Ascending aorta (tissue), 2 donors: ENCODE measurements at regions of chr10 and their contacts with region 1.

Region 1: DNA sequence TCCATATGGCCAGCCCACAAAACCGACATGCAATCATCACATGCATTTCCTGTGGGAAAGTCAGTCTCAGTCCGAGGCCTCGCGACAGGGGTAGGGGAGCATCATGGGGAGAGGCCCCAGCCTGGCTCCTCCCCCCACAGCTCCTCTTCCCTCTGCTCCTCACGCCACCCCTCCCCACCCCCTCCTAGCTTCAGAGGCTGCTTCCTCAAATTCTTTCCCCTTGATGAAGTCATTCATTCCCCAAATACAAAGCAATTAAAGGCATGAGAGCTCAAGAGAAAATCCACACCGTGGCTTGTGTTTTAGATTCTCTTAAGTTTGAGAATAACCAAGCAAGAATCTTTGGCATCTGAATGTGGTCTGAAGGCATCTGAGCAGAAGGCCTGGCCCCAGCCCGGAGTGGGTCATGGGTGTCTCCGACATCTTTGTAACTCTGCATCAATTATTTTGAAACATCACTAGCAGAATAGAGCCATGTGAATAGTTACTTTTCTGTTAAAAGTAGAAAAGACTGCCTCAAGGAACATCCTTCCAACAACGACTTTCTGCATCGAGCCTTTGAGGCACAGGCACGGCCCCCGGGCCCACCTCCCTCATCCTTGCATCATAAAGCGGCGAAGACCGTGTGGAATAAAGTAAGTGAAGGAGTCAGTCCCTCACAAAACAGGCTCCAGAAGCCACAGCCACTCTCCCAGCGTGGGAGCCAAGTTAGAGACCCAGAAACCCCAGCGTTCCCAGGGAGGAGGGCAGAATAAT is 90.9 kb downstream of the DIP2C start:
- DNase-seq: peak in 1 of 2 donors; percentile 69
- H3K4me3 ChIP-seq: no peak overlapping the region
- H3K27ac ChIP-seq: peak overlapping the region; percentile 92 to 95
- H3K4me1 ChIP-seq: peaks cover 6 to 53% of the 10 kb centered on the region in 2 donors
- H3K27me3 ChIP-seq: no peaks in the 10 kb centered on the region
- CTCF ChIP-seq: no peak

Region 2: DNA sequence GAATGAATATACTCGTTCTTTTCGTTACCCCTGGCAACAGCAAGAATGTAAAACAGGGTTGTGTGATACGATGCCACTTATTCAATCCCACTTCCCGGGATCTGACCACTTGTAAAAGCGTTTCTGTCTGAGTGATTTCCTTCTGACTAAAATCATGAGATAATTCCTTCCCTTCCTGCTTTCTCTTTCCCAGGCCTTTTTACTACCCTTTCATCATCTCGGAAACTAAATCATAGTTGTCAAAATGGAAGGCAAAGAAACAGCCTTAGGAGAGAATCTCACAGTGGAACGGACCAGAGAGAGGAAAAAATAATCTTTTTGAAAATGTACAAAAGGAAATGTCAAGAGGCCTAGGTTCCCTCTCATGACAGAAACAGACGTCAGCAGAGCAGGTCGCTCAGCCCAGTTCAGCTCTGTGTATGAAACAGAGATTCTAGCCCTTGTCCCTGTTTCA is 61.1 kb after region 1 on chr10:
- intact Hi-C with region 1: loop called (anchors 5 kb)
- DNase-seq: no peak
- H3K4me3 ChIP-seq: peak overlapping the region in 1 of 2 donors; percentile 27
- H3K27ac ChIP-seq: peak overlapping the region; percentile 40 to 48
- H3K4me1 ChIP-seq: peaks cover 0 to 22% of the 10 kb centered on the region in 2 donors
- H3K27me3 ChIP-seq: no peaks in the 10 kb centered on the region
- CTCF ChIP-seq: no peak